OCI-LY7 (cell line): ENCODE measurements at regions of chr7 and their contacts with region 1.

Region 1: DNA sequence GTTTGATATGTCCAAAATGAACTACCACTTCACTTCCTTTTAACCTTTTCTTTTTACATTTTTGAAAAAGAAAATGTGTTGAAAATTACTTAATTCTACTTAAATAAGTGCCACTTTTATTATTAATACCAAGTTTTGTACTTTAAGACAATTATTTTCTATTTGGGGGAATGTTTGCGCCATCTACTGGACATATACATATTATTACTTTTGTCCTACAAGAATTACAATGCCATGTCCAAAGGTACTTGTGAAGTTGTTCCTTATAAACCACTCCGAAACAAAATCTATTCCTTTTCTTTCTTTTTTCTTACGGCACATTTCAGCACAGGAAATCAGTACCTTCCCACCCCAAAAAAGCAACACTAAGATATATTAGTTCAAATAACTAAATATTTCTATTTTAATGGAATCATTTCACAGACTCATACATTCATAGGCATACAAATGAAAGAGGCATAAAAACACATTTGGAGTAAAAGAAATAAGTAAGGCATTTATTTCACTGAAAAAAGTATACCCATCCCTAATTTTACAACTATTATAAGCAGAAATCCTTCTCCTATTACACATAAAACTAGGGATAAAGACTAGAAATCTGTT is 169.9 kb downstream of the RNF133 start:
- DNase-seq: peak; percentile 40
- H3K4me3 ChIP-seq: no peak overlapping the region
- H3K27ac ChIP-seq: no peak overlapping the region
- H3K4me1 ChIP-seq: no peaks in the 10 kb centered on the region
- CTCF ChIP-seq: peak; percentile 89

Region 2: GRCh38 chr7:122092964-122093797 is 435.8 kb before region 1 on chr7:
- CTCF ChIA-PET with region 1: no interaction called
- POLR2A ChIA-PET with region 1: no interaction called
- intact Hi-C with region 1: loop called (anchors 2 kb)
- DNase-seq: peak; percentile 61
- H3K4me3 ChIP-seq: no peak overlapping the region
- H3K27ac ChIP-seq: no peak overlapping the region
- H3K4me1 ChIP-seq: no peaks in the 10 kb centered on the region
- CTCF ChIP-seq: peak; percentile 93

Region 3: GRCh38 chr7:122219253-122219865 is 309.6 kb before region 1 on chr7:
- CTCF ChIA-PET with region 1: no interaction called
- POLR2A ChIA-PET with region 1: no interaction called
- intact Hi-C with region 1: loop called (anchors 1 kb)
- DNase-seq: peak; percentile 8
- H3K4me3 ChIP-seq: no peak overlapping the region
- H3K27ac ChIP-seq: no peak overlapping the region
- H3K4me1 ChIP-seq: no peaks in the 10 kb centered on the region
- CTCF ChIP-seq: peak; percentile 82

Region 4: DNA sequence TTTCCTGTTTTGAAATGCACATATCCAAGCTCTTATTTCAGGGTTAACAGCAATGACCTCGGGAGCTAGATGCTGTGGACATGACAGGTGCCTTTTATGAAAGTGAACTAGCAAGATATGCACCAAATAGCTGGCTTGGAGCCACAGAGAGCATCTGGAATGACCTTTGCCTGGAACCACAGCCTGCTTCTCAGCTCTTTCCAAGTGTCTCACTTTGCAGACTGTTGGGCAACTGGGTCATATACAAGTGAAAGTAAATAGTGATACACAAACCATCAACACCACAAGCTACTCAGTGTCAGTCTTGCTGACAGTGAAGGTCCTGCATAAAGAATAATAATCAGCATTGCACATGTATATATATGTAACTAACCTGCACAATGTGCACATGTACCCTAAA is 13.6 kb before region 1 on chr7:
- CTCF ChIA-PET with region 1: no interaction called
- POLR2A ChIA-PET with region 1: no interaction called
- intact Hi-C with region 1: no loop called
- DNase-seq: no peak
- H3K4me3 ChIP-seq: no peak overlapping the region
- H3K27ac ChIP-seq: no peak overlapping the region
- H3K4me1 ChIP-seq: no peaks in the 10 kb centered on the region
- CTCF ChIP-seq: no peak